ENCODE measurements at regions of chr12 and their contacts with region 1.

Region 1: GRCh38 chr12:50986966-50987737 is 34.8 kb downstream of the HIGD1C start:
- DNase-seq: no peak
- ATAC-seq: peak; percentile 66 to 79
- H3K4me3 ChIP-seq: no peak overlapping the region
- H3K27ac ChIP-seq: no peak overlapping the region
- H3K4me1 ChIP-seq: peaks cover 28% of the 10 kb centered on the region
- H3K27me3 ChIP-seq: no peaks in the 10 kb centered on the region
- CTCF ChIP-seq: peak; percentile 58

Region 2: DNA sequence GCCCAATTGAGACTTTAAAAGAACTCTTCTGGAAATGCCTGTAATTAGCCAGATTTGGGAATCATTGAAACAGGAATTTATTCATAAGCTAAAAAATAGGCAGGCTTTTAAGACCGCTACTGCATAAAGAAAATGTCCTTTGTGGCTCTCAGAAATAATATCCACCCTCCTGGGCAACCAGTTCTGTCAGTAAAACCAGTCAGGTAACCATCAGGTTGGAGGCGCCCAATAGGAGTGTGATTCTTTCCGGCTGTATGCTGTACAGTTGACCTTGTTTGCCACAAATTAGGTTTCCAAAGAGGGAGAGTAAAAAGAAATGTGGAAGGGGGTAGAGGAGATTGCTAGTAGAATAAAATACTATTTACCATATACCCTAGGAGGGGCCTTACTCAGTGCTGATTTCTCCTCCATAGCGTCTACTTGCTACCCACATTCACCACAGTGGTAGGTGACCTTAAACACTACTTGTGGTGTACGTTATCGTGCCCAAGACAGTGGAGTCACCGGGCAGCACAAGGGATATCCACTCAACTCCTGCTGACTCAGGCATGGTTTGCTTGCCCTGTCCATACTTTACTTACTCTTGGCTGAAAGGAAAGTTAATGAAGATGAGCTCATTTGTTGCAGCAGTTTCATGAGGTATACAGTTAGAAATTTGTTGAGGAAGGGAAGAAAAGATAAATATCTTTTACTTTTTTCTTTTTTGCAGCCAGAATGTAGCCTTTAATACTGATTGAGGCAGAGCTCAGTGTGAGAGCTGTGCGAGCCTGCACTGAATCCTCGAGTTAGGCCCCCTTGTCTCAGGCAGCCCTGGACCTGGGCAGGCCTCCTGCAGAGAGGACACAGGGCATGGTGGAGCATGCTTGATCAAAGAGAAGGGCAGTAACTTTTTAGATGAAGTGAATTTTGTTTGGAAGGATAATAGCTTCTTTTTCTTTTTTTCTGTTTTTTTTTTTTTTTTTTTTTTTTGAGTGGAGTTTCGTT is 405.7 kb before region 1 on chr12:
- intact Hi-C with region 1: no loop called
- DNase-seq: no peak
- ATAC-seq: peak in 1 of 2 donors; percentile 54
- H3K4me3 ChIP-seq: no peak overlapping the region
- H3K27ac ChIP-seq: no peak overlapping the region
- H3K4me1 ChIP-seq: peaks cover 32% of the 10 kb centered on the region
- H3K27me3 ChIP-seq: no peaks in the 10 kb centered on the region
- CTCF ChIP-seq: no peak

Region 3: DNA sequence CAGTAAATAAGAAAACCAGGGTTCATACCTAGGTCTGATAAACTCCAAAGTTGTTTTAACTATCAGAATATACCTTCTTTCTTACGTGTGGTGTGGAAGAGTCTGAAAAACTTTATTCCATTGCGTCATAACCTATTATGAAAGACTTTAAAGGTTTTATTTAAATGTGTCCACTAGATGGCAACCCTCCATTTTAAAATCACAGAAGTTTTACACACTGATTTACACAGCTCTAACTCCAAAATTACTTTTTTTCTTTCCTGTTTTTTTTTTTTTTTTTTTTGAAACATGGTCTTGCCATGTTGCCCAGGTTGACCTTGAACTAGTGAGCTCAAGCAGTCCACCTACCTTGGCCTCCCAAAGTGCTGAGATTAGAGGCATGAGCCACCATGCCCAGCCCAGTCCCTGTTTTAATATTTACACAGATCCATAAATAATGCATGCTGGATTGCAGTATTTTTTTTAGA is 161.7 kb before region 1 on chr12:
- intact Hi-C with region 1: loop called (anchors 5 kb)
- DNase-seq: no peak
- ATAC-seq: peak; percentile 80 to 88
- H3K4me3 ChIP-seq: no peak overlapping the region
- H3K27ac ChIP-seq: peak overlapping the region; percentile 63
- H3K4me1 ChIP-seq: peaks cover 6% of the 10 kb centered on the region
- H3K27me3 ChIP-seq: no peaks in the 10 kb centered on the region
- CTCF ChIP-seq: peak; percentile 55

Region 4: GRCh38 chr12:50934981-50935807 is 52.0 kb before region 1 on chr12:
- intact Hi-C with region 1: loop called (anchors 10 kb)
- DNase-seq: no peak
- ATAC-seq: peak; percentile 70 to 71
- H3K4me3 ChIP-seq: peak overlapping the region; percentile 3
- H3K27ac ChIP-seq: peak overlapping the region; percentile 70
- H3K4me1 ChIP-seq: peaks cover 53% of the 10 kb centered on the region
- H3K27me3 ChIP-seq: no peaks in the 10 kb centered on the region
- CTCF ChIP-seq: no peak